Common myeloid progenitor, CD34-positive (primary cell): ENCODE measurements at regions of chr4 and their contacts with region 1.

Region 1: DNA sequence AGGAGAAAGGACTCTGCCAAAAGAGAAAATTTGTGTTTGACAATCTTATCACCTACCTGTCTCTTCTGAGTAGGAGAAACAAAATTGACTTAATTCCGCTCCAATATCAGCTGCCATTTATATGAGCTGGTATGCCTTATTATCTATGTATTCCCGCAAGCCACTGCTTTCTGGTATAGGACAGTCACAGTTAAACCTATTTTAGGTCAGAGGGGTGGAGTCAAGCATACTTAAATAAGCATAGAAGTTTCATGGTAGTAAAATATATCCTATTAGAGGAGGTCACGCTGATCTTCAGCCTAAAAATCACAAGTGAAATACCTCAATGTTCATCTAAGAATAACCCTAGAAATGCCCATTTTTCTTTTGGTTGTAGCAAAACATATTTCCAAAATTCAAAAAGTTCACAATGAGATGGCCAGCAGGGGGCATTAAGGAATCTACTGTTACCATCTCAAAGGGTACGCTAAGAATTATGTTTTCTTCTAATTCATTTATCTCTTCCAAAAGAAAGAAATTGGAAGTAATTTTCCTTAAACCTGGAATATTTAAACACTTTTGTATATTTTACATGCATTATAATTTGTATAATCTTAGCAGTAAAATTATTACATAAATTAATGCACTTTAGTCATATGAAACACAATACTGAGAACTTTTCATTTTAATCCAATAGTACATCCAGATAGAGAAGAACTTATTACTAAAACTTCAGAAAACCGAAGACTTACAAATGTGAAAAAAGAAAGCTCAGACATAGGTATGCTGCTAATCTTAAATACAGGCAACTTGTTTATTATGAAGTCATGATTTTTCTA is 10.5 kb downstream of the PPAT start:
- DNase-seq: peak; percentile 50 to 71 (median 65)
- H3K4me3 ChIP-seq: no peak overlapping the region
- H3K27ac ChIP-seq: no peak overlapping the region
- H3K4me1 ChIP-seq: no peaks in the 10 kb centered on the region
- H3K27me3 ChIP-seq: no peaks in the 10 kb centered on the region

Region 2: GRCh38 chr4:56410235-56411062 is 14.5 kb before region 1 on chr4:
- CTCF ChIA-PET with region 1: interaction called, 14 read pairs
- POLR2A ChIA-PET with region 1: no interaction called
- DNase-seq: peak; percentile 74 to 90 (median 85)
- H3K4me3 ChIP-seq: peak overlapping the region in 2 of 7 experiments; percentile 47 to 48
- H3K27ac ChIP-seq: peak overlapping the region; percentile 43 to 70
- H3K4me1 ChIP-seq: peaks cover 0 to 21% (median 0%) of the 10 kb centered on the region in 4 experiments
- H3K27me3 ChIP-seq: no peaks in the 10 kb centered on the region

Region 3: GRCh38 chr4:56435306-56435926 is 10.5 kb after region 1 on chr4 and contains the start of gene PPAT:
- CTCF ChIA-PET with region 1: interaction called, 63 read pairs
- POLR2A ChIA-PET with region 1: no interaction called
- DNase-seq: peak; percentile 97 to 99 (median 99)
- H3K4me3 ChIP-seq: peak within 1 kb of the TSS; percentile 63 to 98 (median 89)
- H3K27ac ChIP-seq: peak within 1 kb of the TSS; percentile 40 to 84
- H3K4me1 ChIP-seq: peaks cover 11 to 43% (median 31%) of the 10 kb centered on the region in 4 experiments
- H3K27me3 ChIP-seq: no peaks in the 10 kb centered on the region

Region 4: GRCh38 chr4:56544573-56545131 is 119.7 kb after region 1 on chr4:
- CTCF ChIA-PET with region 1: interaction called, 11 read pairs
- POLR2A ChIA-PET with region 1: no interaction called
- DNase-seq: peak; percentile 85 to 89 (median 88)
- H3K4me3 ChIP-seq: peak overlapping the region in 6 of 7 experiments; percentile 50 to 76 (median 64)
- H3K27ac ChIP-seq: no peak overlapping the region
- H3K4me1 ChIP-seq: peaks cover 0 to 8% (median 5%) of the 10 kb centered on the region in 4 experiments
- H3K27me3 ChIP-seq: no peaks in the 10 kb centered on the region